ENCODE measurements at regions of chr10 and their contacts with region 1.

Region 1: GRCh38 chr10:69901628-69902505 is 100.2 kb downstream of the COL13A1 start:
- DNase-seq: peak; percentile 71
- H3K4me3 ChIP-seq: no peak overlapping the region
- H3K27ac ChIP-seq: peak overlapping the region; percentile 38
- H3K4me1 ChIP-seq: peaks cover 11% of the 10 kb centered on the region
- H3K27me3 ChIP-seq: no peaks in the 10 kb centered on the region
- CTCF ChIP-seq: peak; percentile 71 to 81
- POLR2A ChIP-seq: no peak

Region 2: DNA sequence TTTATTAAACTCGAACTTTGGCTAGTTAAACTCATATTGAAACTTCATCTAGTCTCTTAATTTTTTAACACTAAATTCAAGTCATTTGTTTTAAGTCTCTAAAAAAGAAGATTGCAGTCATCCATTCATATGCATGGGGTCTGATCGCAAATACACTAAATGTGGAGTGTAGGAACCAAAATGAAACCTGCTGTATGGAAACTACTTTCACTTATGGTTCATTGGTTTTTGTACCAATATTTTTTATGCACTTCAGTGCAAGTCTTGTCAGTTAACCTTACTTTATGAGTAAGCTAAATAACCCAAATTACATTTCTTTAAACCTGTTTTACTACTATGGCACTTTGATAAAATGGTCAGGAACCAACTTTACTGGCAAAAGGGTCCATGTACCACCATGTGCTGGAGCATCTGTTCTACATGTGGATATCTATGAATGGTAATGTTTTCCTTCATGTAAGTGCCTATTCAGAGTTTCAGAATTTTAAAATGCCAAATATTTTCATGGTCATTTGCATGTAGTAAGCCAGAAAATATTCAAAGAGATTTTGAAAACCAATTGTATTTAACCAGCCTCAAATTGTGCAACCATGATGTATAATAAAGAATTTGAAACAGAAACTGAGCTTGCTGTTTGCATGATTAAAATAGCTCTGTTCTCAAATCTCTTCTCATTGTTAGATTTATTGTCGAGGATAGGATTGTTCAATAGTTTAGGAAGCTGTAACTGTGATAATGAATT is 729.5 kb before region 1 on chr10:
- CTCF ChIA-PET with region 1: no interaction called
- POLR2A ChIA-PET with region 1: no interaction called
- dilution Hi-C with region 1: no loop called
- intact Hi-C with region 1: no loop called
- DNase-seq: no peak
- H3K4me3 ChIP-seq: no peak overlapping the region
- H3K27ac ChIP-seq: no peak overlapping the region
- H3K4me1 ChIP-seq: no peaks in the 10 kb centered on the region
- H3K27me3 ChIP-seq: no peaks in the 10 kb centered on the region
- CTCF ChIP-seq: no peak
- POLR2A ChIP-seq: no peak

Region 3: GRCh38 chr10:69869291-69869961 is 32.4 kb before region 1 on chr10:
- CTCF ChIA-PET with region 1: interaction called, 7 read pairs
- POLR2A ChIA-PET with region 1: no interaction called
- dilution Hi-C with region 1: no loop called
- intact Hi-C with region 1: loop called (anchors 2 kb)
- DNase-seq: peak; percentile 46
- H3K4me3 ChIP-seq: no peak overlapping the region
- H3K27ac ChIP-seq: peak overlapping the region; percentile 39
- H3K4me1 ChIP-seq: peaks cover 66% of the 10 kb centered on the region
- H3K27me3 ChIP-seq: no peaks in the 10 kb centered on the region
- CTCF ChIP-seq: no peak
- POLR2A ChIP-seq: no peak

Region 4: DNA sequence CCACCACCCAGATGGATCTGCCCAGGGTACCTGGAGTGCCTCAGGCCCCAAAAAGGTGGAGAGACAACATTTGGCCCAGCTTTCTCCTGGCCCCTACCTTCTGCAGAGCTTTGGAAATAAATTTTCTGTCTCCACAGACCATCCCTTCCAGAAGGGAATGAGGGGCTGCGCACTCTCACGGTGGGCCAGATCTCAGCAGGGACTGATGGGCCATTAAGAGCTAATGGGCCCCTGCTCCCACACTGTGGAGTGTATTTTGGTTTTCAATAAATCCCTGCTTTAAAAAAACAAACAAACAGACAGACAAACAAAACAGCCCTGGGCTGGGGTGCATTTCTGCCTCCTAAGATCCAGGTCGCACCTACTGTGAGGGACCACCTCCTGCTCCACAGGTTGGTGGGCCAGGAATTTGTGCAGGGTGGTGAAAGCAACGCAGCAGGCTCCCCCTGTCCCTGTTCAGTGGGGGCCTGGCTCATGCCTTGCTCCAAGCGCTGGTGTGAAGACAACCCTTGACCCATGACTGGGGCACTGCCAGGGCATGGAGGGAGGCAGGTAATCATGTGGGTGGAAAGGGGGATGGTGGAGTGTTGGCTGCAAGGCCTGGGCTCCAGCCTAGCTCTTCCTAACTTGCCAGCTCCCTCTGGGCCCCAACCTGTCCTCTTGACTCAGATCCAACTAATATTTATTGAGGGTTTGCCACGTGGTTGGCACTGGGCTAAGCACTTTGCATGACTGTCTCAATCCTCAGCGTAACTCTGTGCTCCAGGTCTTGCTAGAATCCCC is 11.6 kb before region 1 on chr10:
- CTCF ChIA-PET with region 1: interaction called, 17 read pairs
- POLR2A ChIA-PET with region 1: no interaction called
- dilution Hi-C with region 1: no loop called
- intact Hi-C with region 1: no loop called
- DNase-seq: no peak
- H3K4me3 ChIP-seq: no peak overlapping the region
- H3K27ac ChIP-seq: no peak overlapping the region
- H3K4me1 ChIP-seq: no peaks in the 10 kb centered on the region
- H3K27me3 ChIP-seq: no peaks in the 10 kb centered on the region
- CTCF ChIP-seq: no peak
- POLR2A ChIP-seq: no peak

Region 5: DNA sequence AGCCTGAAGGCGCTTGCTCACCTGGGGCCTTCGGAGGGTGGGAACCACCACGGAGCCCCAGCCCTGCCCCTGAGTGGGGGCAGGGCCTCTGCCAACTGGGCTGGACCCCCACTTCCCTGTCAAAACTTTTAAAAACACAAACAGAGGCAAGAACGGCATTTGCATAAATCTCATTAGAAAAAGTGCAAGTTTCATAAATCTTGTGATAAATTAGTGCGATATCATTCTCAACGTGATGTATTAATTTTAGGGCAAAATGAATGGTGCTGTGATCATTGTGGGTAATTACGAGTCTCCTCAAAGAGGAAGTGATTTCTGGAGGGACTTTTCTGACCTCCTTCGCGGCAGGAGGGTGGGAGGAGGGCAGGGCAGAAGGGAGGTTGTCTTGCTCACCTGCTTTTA is 1593.1 kb after region 1 on chr10:
- CTCF ChIA-PET with region 1: no interaction called
- POLR2A ChIA-PET with region 1: no interaction called
- dilution Hi-C with region 1: no loop called
- intact Hi-C with region 1: no loop called
- DNase-seq: no peak
- H3K4me3 ChIP-seq: no peak overlapping the region
- H3K27ac ChIP-seq: no peak overlapping the region
- H3K4me1 ChIP-seq: no peaks in the 10 kb centered on the region
- H3K27me3 ChIP-seq: peaks cover 17 to 22% of the 10 kb centered on the region in 2 experiments
- CTCF ChIP-seq: no peak
- POLR2A ChIP-seq: no peak

Measured in endothelial cell of umbilical vein (primary cell).